Esophagus muscularis mucosa (tissue), 4 donors: ENCODE measurements at regions of chr3 and their contacts with region 1.

Region 1: DNA sequence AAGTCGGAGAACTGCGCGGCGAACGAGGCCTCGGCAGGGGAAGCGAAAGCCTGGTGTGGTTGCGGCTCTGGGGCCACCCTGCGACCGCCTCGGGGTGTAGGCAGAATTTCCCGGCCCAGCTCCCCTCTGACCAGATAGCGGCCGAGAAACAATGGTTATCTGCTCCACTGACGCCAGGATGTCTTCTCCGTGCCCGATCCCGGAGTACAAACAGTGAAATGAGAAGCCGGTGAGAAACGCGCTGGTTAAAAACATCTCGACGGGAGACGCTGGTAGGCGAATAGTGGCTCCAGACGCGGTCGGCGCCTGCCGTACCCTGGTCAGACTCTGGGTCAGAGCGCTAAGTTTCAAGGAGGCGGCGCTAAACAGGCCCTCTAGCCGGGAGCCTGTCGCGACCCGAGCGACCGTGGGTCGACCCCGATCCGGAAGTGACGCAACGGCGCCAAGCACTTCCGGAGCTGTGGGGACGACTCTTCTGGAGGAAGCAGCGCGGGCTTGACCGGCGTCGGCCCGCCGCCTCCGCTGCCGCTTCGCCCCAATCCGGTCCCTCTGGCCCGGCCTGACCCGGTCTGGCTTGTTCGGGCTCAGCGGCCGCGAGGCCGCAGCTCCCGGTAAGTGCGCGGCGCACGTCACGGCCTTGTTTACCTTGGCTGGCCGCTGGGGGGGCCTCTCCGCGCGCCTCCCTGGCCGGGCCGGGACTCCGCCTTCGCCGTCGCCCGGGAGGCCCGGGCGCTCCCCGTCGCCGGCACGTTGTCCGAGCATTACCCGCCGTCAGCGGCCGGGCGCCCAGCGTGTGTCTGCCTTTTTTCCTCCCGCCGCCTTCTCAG is at the start of gene ARIH2:
- DNase-seq: peak; percentile 97
- H3K4me3 ChIP-seq: peak within 1 kb of the TSS; percentile 76 to 89 (median 82)
- H3K27ac ChIP-seq: peak within 1 kb of the TSS; percentile 88 to 98 (median 94)
- H3K4me1 ChIP-seq: peaks cover 27 to 43% (median 38%) of the 10 kb centered on the region in 4 donors
- H3K27me3 ChIP-seq: no peaks in the 10 kb centered on the region
- CTCF ChIP-seq: peak in 1 of 3 experiments; percentile 14
- EP300 ChIP-seq: no peak
- POLR2A ChIP-seq: peak; percentile 71
- total RNA-seq, gene ARIH2: 78.9 to 109 (median 97.5) TPM

Region 2: GRCh38 chr3:48847504-48848423 is 70.8 kb before region 1 on chr3 and contains the start of gene PRKAR2A:
- intact Hi-C with region 1: loop called (anchors 5 kb)
- DNase-seq: peak; percentile 95
- H3K4me3 ChIP-seq: peak within 1 kb of the TSS; percentile 76 to 94 (median 84)
- H3K27ac ChIP-seq: peak within 1 kb of the TSS; percentile 91 to 97 (median 96)
- H3K4me1 ChIP-seq: peaks cover 19 to 30% (median 28%) of the 10 kb centered on the region in 4 donors
- H3K27me3 ChIP-seq: no peaks in the 10 kb centered on the region
- CTCF ChIP-seq: peak in 2 of 3 experiments; percentile 6 to 9
- EP300 ChIP-seq: no peak
- POLR2A ChIP-seq: peak; percentile 73
- total RNA-seq, gene PRKAR2A: 30.7 to 43.3 (median 34.2) TPM

Region 3: DNA sequence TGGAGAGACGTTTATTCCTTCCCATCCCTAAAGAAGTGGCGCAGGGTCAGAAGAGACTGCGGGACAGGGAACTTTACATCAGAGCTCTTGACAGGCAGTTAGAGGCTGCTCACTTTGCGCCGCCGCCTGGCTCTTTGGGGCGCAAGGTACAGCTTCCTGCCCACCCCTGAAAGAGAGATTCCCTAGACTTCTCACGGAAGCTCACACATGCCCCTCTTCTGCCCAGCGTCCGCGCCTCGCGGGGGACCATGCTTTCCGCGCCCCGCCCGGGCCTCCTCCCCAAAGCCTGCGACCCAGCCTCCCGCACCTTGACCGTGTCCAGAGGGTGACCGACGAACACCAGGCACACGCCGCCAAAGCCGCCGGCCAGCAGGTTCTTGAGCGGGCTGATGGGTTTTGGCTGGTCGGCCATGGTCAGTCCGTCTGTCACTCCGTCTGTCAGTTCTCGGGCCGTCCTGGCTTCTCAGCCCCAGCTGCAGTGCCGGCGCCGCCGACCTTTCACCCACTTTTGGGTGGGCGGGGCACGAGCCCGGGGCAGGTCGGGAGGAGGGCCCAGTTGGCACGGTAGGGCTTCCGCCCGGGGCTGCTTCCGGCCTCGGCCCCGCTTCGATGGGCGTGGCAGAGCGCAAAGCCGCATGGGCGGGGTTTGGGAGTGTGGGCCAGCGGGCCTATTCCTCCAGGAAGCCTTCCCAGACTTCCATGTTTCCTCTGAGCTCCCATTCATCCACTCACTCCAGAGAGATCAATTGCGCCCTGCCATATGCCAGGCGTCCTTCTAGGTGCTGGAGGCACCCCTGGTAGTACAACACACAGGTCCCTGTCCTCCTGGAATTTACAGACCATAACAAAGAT is 20.0 kb before region 1 on chr3 and contains the start of gene SLC25A20:
- intact Hi-C with region 1: loop called (anchors 2 kb)
- DNase-seq: peak; percentile 95
- H3K4me3 ChIP-seq: peak within 1 kb of the TSS; percentile 74 to 95 (median 84)
- H3K27ac ChIP-seq: peak within 1 kb of the TSS; percentile 66 to 92 (median 84)
- H3K4me1 ChIP-seq: peaks cover 13 to 25% (median 19%) of the 10 kb centered on the region in 4 donors
- H3K27me3 ChIP-seq: no peaks in the 10 kb centered on the region
- CTCF ChIP-seq: peak in 1 of 3 experiments; percentile 3
- EP300 ChIP-seq: no peak
- POLR2A ChIP-seq: no peak
- total RNA-seq, gene SLC25A20: 13.3 to 34.6 (median 21.8) TPM

Region 4: DNA sequence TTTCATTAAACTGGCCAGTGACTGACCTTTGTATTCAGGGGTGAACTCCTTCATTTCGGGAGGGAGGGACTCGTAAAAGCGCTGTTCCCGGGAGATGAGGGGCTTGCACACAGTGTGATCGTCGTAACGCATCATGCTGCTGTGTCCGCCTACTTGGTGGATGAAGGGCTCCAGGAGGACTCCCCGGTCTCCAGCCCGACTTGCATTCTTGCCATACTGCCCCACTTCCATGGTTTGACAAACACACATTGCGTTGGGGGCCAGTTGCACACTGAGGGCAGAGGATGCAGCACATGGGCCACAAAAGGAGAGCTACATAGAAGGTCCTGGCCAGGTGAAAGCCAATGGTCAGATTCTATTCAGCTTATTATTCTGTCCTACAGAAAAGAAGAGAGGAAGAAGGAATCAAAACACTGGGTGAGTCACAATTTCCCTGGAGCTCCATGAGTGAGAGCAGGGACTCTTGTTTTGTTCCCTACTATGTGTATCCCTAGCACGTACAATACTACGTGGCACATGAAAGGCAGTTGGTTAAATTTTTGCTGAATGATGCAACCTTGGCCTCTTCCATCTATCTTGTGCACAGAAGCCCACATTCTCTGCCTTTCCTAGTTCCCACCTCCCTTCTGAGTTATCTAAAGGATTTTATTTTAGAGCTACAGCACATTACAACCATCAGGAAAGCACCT is 829.3 kb after region 1 on chr3:
- intact Hi-C with region 1: no loop called
- DNase-seq: no peak
- H3K4me3 ChIP-seq: no peak overlapping the region
- H3K27ac ChIP-seq: no peak overlapping the region
- H3K4me1 ChIP-seq: peaks cover 0 to 25% (median 22%) of the 10 kb centered on the region in 4 donors
- H3K27me3 ChIP-seq: no peaks in the 10 kb centered on the region
- CTCF ChIP-seq: no peak
- EP300 ChIP-seq: no peak
- POLR2A ChIP-seq: no peak